ENCODE measurements at regions of chr12 and their contacts with region 1.

Region 1: DNA sequence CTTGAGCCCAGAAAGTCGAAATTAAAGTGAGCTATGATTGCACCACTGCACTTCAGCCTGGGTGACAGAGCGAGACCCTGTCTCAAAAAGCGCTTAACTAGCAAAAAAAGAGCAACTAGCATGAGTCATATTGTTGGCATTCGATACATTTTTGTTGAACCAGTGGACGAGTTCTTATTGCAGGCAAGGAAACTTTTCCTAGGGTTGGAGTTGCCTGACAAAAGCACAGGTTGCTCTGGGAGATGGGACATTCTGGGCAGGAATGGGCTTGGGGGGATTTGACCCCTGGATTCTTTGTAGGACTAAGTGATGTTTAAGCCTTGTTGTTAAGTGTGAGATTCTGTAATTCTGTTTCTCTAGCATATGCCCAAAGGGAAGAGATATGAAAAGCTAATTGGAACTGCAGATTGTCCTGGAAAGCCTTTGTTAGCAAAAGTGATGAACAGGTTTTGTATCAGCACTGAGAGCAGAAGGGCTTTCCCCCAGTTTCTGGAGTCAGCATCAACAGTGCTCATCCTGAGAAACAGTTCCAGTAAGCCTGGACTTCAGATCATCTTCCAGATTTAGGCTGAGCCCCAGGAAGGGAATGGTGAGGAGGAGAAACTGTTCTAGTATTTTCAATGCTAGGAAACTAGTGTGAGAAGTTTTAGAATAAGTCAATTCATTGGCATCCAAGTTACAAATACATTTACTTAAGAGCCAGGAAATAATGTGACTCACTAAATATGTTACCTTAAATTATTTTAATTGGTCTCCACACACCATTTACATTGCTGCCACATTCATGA is 123.1 kb downstream of the SRGAP1 start:
- DNase-seq: no peak
- H3K4me3 ChIP-seq: no peak overlapping the region
- H3K4me3 Mint-ChIP-seq: no peak overlapping the region
- H3K27ac ChIP-seq: no peak overlapping the region
- H3K27ac Mint-ChIP-seq: peak overlapping the region in 1 of 7 donors; percentile 58
- H3K4me1 ChIP-seq: peaks cover 25 to 32% of the 10 kb centered on the region in 2 donors
- H3K4me1 Mint-ChIP-seq: peaks cover 37% of the 10 kb centered on the region
- H3K27me3 ChIP-seq: no peaks in the 10 kb centered on the region
- H3K27me3 Mint-ChIP-seq: peaks cover 0 to 2% (median 2%) of the 10 kb centered on the region in 3 donors
- CTCF ChIP-seq: no peak

Region 2: GRCh38 chr12:63897931-63898330 is 69.6 kb before region 1 on chr12:
- intact Hi-C with region 1: loop called in 1 of 2 experiments (anchors 10 kb)
- DNase-seq: peak in 1 of 3 donors; percentile 56
- H3K4me3 ChIP-seq: no peak overlapping the region
- H3K4me3 Mint-ChIP-seq: no peak overlapping the region
- H3K27ac ChIP-seq: no peak overlapping the region
- H3K27ac Mint-ChIP-seq: peak overlapping the region in 1 of 7 donors; percentile 42
- H3K4me1 ChIP-seq: peaks cover 13 to 33% of the 10 kb centered on the region in 2 donors
- H3K4me1 Mint-ChIP-seq: peaks cover 32% of the 10 kb centered on the region
- H3K27me3 ChIP-seq: no peaks in the 10 kb centered on the region
- H3K27me3 Mint-ChIP-seq: no peaks in the 10 kb centered on the region
- CTCF ChIP-seq: no peak

Measured in CD14-positive monocyte (primary cell).